Ovary (tissue), 10 donors: ENCODE measurements at regions of chr1 and their contacts with region 1.

Region 1: GRCh38 chr1:180178511-180179161 is 24.0 kb downstream of the QSOX1 start:
- DNase-seq: peak; percentile 59 to 80 (median 76)
- H3K4me3 ChIP-seq: no peak overlapping the region
- H3K27ac ChIP-seq: no peak overlapping the region
- H3K4me1 ChIP-seq: peaks cover 10% of the 10 kb centered on the region
- H3K27me3 ChIP-seq: no peaks in the 10 kb centered on the region
- CTCF ChIP-seq: peak; percentile 86 to 91 (median 87)
- EP300 ChIP-seq: no peak
- POLR2A ChIP-seq: no peak

Region 2: DNA sequence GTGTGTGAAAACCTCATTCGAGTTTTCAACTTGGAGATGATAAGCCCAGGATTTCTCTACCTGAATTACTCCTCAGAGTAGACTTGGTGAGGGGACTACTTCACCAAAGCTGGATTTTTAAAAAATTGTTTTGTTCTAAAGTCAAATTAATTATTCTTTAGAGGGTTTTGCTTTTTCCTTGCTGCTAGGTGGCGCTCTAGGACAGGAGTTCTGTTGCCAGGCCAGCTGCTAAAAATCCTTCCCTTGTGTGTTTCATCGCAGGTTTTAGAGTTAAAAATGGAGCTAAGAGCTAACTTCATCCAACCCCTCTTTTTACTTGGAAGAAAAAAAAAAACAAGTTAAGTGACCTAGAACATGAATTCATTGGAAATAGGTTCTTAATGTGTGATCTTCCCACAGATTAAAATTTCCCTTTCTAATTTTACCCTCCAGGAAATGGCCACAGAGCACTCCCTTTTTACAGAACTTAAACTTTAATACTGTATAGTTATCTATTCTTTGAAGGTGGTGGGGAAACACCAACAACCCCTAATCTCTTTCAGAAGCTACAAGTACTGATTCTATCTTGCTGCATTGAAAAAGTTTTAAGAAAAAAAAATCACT is 472.2 kb before region 1 on chr1:
- intact Hi-C with region 1: loop called in 3 of 4 experiments (anchors 10 kb)
- DNase-seq: peak; percentile 52 to 69 (median 60)
- H3K4me3 ChIP-seq: no peak overlapping the region
- H3K27ac ChIP-seq: no peak overlapping the region
- H3K4me1 ChIP-seq: no peaks in the 10 kb centered on the region
- H3K27me3 ChIP-seq: no peaks in the 10 kb centered on the region
- CTCF ChIP-seq: peak; percentile 22 to 76 (median 61)
- EP300 ChIP-seq: no peak
- POLR2A ChIP-seq: no peak

Region 3: DNA sequence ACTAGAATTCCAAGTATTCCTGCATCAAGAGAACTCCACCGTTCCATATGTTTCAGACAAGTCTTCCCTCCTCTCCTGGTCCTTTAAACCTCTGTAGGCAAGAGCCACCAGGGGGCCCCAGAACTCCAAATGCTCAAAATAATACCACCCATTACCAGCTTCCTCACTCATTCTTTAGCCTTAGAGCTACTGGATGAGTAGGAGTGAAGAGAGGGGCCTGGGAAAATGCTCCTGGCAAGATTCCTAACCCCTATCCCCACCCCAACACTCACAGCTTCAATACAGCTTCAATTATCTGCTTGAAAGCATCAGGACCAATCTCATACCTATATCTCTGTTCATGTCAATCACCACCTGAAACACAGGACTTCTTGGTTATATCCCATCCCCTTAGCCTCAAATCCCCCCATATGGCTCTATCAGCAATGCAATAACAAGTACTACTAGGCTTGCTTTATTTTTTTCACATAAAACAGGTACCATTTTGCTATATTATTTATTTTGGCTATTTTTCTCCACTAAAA is 310.8 kb before region 1 on chr1:
- intact Hi-C with region 1: loop called in 3 of 4 experiments (anchors 5 to 10 kb)
- DNase-seq: peak in 4 of 5 donors; percentile 28 to 59 (median 48)
- H3K4me3 ChIP-seq: no peak overlapping the region
- H3K27ac ChIP-seq: no peak overlapping the region
- H3K4me1 ChIP-seq: no peaks in the 10 kb centered on the region
- H3K27me3 ChIP-seq: no peaks in the 10 kb centered on the region
- CTCF ChIP-seq: peak in 1 of 3 donors; percentile 42
- EP300 ChIP-seq: no peak
- POLR2A ChIP-seq: no peak

Region 4: GRCh38 chr1:180070286-180070685 is 108.3 kb before region 1 on chr1:
- intact Hi-C with region 1: loop called in 2 of 4 experiments (anchors 10 kb)
- DNase-seq: no peak
- H3K4me3 ChIP-seq: no peak overlapping the region
- H3K27ac ChIP-seq: no peak overlapping the region
- H3K4me1 ChIP-seq: no peaks in the 10 kb centered on the region
- H3K27me3 ChIP-seq: no peaks in the 10 kb centered on the region
- CTCF ChIP-seq: no peak
- EP300 ChIP-seq: no peak
- POLR2A ChIP-seq: no peak

Region 5: DNA sequence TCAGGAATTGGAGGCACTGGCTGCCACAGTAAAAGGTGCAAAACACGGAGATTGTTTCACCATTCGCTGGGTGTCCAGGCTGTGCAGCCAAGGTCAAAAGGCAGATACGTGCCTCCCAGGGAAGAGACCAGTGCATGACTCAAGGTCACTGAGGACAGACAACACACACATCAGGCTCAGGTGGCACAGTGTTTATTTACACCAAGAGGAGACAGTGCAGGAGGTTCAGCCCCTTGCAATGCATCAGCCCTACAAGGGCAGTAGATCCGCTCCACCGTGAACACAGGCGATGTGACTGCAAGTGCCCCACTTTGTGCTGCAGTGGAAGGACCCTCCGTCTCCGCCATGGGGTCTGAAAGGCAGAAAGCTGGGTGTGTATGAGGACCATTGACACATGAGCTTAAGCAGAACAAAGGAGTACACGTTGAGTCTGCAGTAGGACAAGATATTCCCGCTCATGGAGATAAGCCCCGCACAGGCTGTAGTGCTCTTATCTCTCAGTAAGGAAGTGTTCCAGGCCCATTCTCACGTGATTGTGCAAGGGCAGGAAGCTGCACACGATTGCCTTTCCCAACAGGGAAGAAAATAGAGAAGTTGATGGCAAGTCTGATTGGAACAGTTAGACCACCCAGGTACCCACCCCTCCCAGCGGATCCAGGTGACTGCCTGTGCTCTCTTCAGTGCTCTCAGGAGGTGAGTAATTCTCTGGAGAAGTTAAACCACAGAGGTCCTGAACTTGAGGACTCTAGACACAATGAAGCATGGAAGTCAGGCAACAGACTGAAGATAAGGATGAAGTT is 61.5 kb before region 1 on chr1:
- intact Hi-C with region 1: loop called in 1 of 4 experiments (anchors 10 kb)
- DNase-seq: peak in 4 of 5 donors; percentile 39 to 78 (median 71)
- H3K4me3 ChIP-seq: no peak overlapping the region
- H3K27ac ChIP-seq: no peak overlapping the region
- H3K4me1 ChIP-seq: peaks cover 15% of the 10 kb centered on the region
- H3K27me3 ChIP-seq: no peaks in the 10 kb centered on the region
- CTCF ChIP-seq: no peak
- EP300 ChIP-seq: no peak
- POLR2A ChIP-seq: no peak